ENCODE measurements at regions of chr7 and their contacts with region 1.

Region 1: DNA sequence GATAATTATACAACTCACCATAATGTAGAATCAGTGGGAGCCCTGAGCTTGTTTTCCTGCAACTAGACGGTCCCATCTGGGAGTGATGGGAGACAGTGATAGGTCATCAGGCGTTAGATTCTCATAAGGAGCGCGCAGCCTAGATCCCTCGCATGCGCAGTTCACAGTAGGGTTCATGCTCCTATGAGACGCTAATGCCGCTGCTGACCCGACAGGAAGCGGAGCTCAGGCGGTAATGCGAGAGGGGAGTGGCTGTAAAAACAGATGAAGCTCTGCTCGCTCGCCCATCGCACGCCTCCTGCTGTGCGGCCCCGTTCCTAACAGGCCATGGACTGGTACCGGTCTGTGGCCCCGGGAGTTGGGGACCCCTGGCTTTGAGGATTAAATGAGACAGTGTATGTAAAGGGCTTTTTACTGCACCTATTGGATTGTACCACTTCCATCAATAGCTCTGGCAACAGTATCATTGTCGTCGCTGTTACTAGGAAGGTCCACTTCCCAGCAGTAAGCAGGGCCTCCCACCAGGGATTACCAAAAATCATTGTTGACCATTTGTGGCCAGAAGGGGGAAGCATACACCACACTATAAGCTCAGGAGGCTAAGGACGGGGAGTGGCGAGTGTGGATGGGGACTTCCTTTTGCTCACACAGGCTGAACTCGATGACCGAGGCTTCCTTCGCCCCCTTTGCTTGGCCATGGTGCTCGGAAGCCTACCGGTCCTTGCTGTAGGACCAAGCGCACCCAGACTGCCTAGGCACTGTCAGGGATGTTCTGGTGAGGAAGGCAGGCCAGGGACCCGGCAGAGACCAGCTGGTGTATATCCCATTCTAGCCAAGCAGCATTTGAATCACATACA is 26.4 kb downstream of the AKR1B1 start:
- DNase-seq: peak; percentile 54
- H3K4me3 ChIP-seq: peak overlapping the region; percentile 28
- H3K27me3 ChIP-seq: no peaks in the 10 kb centered on the region
- CTCF ChIP-seq: peak; percentile 53

Region 2: GRCh38 chr7:134448700-134449229 is 16.2 kb after region 1 on chr7:
- CTCF ChIA-PET with region 1: interaction called, 24 read pairs
- POLR2A ChIA-PET with region 1: no interaction called
- DNase-seq: peak; percentile 66
- H3K4me3 ChIP-seq: no peak overlapping the region
- H3K27me3 ChIP-seq: no peaks in the 10 kb centered on the region
- CTCF ChIP-seq: no peak

Region 3: DNA sequence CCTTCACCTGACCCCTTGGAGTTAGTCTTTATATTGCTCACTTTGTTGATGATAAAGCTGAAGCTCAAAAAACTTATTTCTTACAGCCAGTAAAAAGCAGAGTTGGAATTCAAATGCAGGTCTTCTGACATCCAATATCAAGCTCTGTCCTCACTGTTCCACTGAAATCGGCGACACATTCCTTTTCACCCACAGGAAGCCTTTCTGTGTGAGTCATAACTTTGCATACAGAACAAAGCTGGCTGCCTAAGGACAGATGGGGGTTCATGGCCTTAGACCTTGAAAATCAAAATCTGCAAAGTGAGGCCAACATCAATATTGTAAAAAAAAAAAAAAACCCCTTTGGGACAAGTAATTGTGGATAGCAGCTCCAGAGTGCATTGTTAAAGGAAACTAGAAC is 48.2 kb after region 1 on chr7:
- CTCF ChIA-PET with region 1: interaction called, 56 read pairs
- POLR2A ChIA-PET with region 1: no interaction called
- DNase-seq: no peak
- H3K4me3 ChIP-seq: no peak overlapping the region
- H3K27me3 ChIP-seq: no peaks in the 10 kb centered on the region
- CTCF ChIP-seq: no peak

Region 4: DNA sequence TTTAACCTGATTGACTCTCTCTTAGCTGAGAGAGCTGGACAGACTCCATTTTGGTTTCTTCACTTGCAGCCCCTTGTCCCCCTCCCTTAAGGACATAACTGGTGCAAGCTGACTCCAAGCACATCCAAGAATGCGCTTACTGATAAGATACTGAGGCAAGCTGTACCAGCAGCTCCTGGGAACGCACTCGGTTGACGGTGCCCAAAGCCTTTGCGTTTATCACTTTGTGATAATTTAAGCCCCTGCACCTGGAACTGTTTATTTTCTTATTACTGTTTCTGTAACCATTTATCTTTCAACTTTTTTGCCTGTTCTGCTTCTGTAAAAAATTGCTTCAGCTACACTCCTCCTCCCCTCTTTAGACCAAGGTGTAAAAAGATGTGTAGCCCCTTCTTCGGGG is 124.9 kb after region 1 on chr7:
- CTCF ChIA-PET with region 1: no interaction called
- POLR2A ChIA-PET with region 1: no interaction called
- DNase-seq: no peak
- H3K4me3 ChIP-seq: no peak overlapping the region
- H3K27me3 ChIP-seq: peaks cover 5% of the 10 kb centered on the region
- CTCF ChIP-seq: no peak

Region 5: GRCh38 chr7:134599371-134599770 is 166.8 kb after region 1 on chr7:
- CTCF ChIA-PET with region 1: interaction called, 15 read pairs
- POLR2A ChIA-PET with region 1: no interaction called
- DNase-seq: no peak
- H3K4me3 ChIP-seq: no peak overlapping the region
- H3K27me3 ChIP-seq: no peaks in the 10 kb centered on the region
- CTCF ChIP-seq: no peak

Region 6: GRCh38 chr7:134613623-134614347 is 181.3 kb after region 1 on chr7:
- CTCF ChIA-PET with region 1: interaction called, 61 read pairs
- POLR2A ChIA-PET with region 1: no interaction called
- DNase-seq: peak; percentile 97
- H3K4me3 ChIP-seq: no peak overlapping the region
- H3K27me3 ChIP-seq: no peaks in the 10 kb centered on the region
- CTCF ChIP-seq: peak; percentile 14; the same call in 1 of the 2 replicates

Measured in BJ (cell line).